ENCODE measurements at regions of chr3 and their contacts with region 1.

Region 1: DNA sequence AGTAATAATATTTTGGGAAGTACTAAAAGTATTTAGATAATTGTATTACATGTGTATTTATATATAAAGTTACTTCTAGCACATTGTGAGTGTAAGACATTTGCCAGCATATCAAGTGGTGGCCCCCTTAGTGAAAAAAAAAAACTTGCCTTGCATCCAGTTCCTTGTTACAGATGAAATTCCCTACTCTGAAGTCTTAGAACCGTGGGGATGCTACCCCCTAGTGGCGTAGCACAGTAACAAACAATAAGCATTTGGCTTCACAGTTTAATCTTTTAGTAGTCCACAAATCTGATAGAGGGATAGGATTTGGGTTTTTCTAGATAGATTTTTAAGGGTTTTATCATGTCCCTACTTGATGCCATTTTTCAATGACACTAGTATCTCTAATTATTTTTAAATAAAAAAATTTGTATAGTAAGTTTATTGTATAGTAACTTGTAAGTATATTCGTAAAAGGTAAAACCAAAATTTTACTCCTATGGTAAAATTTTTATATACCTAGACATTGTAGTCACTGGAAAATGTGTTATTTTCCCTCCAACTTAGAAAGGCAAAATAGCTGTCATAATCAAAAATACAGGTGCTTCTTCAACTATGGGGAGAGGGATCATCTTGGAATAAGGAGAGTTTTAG is 14.3 kb downstream of the SMC4 start:
- DNase-seq: peak; percentile 47 to 65
- H3K4me3 ChIP-seq: no peak overlapping the region
- H3K27ac ChIP-seq: no peak overlapping the region
- H3K4me1 ChIP-seq: no peaks in the 10 kb centered on the region
- H3K27me3 ChIP-seq: no peaks in the 10 kb centered on the region
- CTCF ChIP-seq: peak; percentile 72 to 90 (median 77)
- POLR2A ChIP-seq: no peak

Region 2: DNA sequence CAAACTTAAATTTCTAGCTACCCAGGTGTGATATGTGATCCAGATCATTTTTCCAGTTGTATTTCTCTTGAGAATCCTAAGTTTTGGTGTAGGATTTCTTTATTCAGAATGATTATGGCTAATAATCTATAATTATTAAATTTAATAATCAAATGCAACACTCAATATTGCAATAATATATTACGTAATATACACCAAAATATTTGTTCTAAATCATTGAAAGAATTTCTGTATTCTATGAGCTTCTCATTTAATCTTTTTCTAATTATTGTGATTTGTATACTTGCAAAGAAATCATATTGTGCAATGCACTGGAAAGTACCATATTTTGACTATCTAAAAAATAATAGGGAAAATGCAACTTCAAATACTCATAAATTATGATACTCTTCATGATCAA is 1102.3 kb before region 1 on chr3:
- intact Hi-C with region 1: no loop called
- DNase-seq: no peak
- H3K4me3 ChIP-seq: no peak overlapping the region
- H3K27ac ChIP-seq: no peak overlapping the region
- H3K4me1 ChIP-seq: no peaks in the 10 kb centered on the region
- H3K27me3 ChIP-seq: no peaks in the 10 kb centered on the region
- CTCF ChIP-seq: no peak
- POLR2A ChIP-seq: no peak

Region 3: DNA sequence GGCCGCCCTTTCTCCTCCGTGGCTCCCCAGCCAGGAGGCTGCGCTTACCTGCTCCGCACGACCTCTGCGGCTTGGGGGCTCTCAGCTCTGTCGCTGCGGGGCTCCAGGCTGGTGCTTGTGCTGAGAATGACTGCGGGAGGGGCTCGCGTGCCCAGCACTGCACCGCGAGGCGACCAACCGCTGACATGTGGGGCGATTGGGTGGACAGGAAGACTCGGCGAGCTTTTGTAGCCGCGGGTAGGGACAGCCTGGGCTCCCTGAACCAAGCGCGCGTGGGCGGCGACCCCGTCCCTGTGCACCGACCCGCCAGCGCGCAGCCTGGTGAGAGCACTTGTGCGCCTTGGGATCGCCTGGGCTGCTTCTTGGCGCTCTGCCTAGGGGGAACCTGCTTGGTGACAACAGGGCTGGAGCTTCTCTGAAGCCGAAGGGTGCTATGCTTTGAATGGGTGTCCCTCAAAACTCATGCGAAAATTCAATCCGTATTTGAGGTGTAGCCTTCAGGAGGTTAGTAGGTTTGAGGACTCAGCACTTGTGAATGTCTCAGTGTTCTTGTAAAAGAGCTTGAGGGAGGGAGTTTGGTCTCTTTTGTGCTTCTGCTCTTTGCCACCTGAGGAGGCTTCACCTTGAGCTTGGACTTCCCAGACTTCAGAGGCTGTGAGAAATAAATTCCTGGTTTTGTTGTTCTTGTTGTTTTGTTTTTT is 374.7 kb before region 1 on chr3:
- intact Hi-C with region 1: loop called (anchors 10 kb)
- DNase-seq: peak; percentile 91 to 93
- H3K4me3 ChIP-seq: peak overlapping the region in 2 of 3 donors; percentile 27 to 28
- H3K27ac ChIP-seq: no peak overlapping the region
- H3K4me1 ChIP-seq: peaks cover 0 to 11% of the 10 kb centered on the region in 2 donors
- H3K27me3 ChIP-seq: no peaks in the 10 kb centered on the region
- CTCF ChIP-seq: no peak
- POLR2A ChIP-seq: no peak

Region 4: DNA sequence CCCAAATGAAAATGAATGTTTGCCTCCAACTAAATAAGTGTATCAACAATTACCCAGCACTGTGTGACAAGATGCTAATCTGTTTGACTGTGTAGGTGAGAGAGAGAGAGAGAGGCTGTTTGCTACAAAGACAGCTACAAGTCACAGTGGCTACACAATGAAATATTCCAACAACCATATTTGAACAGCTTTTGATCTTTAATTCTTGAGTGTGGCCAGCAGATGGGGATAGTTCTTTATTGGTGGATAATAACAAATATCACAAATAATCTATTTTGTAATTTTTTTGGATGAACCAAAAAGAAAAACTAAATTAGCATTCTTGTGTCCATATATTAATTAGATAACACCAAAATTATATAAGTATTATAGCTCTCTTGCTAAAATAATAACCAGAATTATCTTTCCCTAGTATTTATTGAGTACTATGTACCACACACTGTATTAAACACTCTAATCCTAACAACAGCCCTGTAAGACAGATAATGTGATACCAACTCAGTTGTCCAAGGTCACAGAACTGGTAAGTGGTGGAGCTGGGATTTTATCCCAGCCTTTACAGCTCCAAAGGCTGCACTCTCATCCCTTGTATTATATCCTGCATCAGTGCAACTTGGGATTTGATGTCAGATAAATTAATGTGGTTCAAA is 250.4 kb before region 1 on chr3:
- intact Hi-C with region 1: loop called (anchors 5 kb)
- DNase-seq: no peak
- H3K4me3 ChIP-seq: no peak overlapping the region
- H3K27ac ChIP-seq: no peak overlapping the region
- H3K4me1 ChIP-seq: no peaks in the 10 kb centered on the region
- H3K27me3 ChIP-seq: no peaks in the 10 kb centered on the region
- CTCF ChIP-seq: peak in 2 of 6 experiments; percentile 21 to 43
- POLR2A ChIP-seq: no peak

Region 5: GRCh38 chr3:160376681-160377080 is 37.0 kb before region 1 on chr3:
- intact Hi-C with region 1: no loop called
- DNase-seq: no peak
- H3K4me3 ChIP-seq: no peak overlapping the region
- H3K27ac ChIP-seq: no peak overlapping the region
- H3K4me1 ChIP-seq: no peaks in the 10 kb centered on the region
- H3K27me3 ChIP-seq: no peaks in the 10 kb centered on the region
- CTCF ChIP-seq: no peak
- POLR2A ChIP-seq: no peak

Region 6: GRCh38 chr3:160486459-160486869 is 72.7 kb after region 1 on chr3:
- intact Hi-C with region 1: no loop called
- DNase-seq: no peak
- H3K4me3 ChIP-seq: no peak overlapping the region
- H3K27ac ChIP-seq: no peak overlapping the region
- H3K4me1 ChIP-seq: no peaks in the 10 kb centered on the region
- H3K27me3 ChIP-seq: no peaks in the 10 kb centered on the region
- CTCF ChIP-seq: peak in 4 of 6 experiments; percentile 30 to 65 (median 40)
- POLR2A ChIP-seq: no peak

Measured in thyroid gland (tissue), 4 donors.